ENCODE measurements at regions of chr5 and their contacts with region 1.

Region 1: DNA sequence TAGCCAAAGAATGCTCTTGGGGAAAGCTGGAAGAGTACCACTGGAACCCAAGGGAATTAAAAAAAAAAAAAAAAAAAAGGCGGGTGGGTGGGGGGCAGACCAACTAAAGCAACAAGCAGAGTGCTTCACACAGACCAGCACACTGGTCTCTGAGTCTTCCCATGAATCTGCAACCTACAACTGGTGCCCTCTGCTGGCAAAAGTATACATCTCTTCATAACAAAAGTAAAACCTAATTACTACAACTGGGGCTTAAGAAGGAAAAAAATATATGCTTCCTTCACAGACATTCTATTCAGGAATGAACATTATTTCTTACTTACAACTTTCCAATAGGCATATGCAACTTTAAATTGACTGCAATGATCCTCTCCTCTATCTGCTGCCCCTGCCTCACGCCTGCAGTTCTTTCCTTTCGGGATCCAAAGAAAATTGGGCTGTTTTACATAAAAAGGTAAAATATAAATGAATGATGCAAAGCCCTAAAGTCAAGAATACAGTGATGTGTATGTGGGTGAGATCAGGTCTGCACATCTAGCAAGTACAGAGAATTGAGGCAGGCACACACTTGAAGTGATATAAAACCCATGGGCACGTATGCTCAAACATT is 7.2 kb upstream of the KLHL3 start:
- DNase-seq: peak; percentile 26 to 79 (median 38)
- ATAC-seq: peak; percentile 91
- H3K4me3 ChIP-seq: no peak overlapping the region
- H3K27ac ChIP-seq: no peak overlapping the region
- H3K4me1 ChIP-seq: no peaks in the 10 kb centered on the region
- H3K27me3 ChIP-seq: peaks cover 0 to 3% of the 10 kb centered on the region in 2 experiments; a peak in 2 of 5 replicates
- CTCF ChIP-seq: peak; percentile 55 to 78 (median 62)
- EP300 ChIP-seq: no peak
- POLR2A ChIP-seq: no peak
- RAD21 ChIP-seq: peak; percentile 50 to 63

Region 2: GRCh38 chr5:137531266-137531665 is 211.9 kb before region 1 on chr5:
- CTCF ChIA-PET with region 1: no interaction called
- POLR2A ChIA-PET with region 1: no interaction called
- in situ Hi-C with region 1: no loop called
- intact Hi-C with region 1: no loop called
- DNase-seq: no peak
- ATAC-seq: no peak
- H3K4me3 ChIP-seq: no peak overlapping the region
- H3K27ac ChIP-seq: no peak overlapping the region
- H3K4me1 ChIP-seq: no peaks in the 10 kb centered on the region
- H3K27me3 ChIP-seq: no peaks in the 10 kb centered on the region
- CTCF ChIP-seq: no peak
- EP300 ChIP-seq: no peak
- POLR2A ChIP-seq: no peak
- RAD21 ChIP-seq: no peak

Region 3: DNA sequence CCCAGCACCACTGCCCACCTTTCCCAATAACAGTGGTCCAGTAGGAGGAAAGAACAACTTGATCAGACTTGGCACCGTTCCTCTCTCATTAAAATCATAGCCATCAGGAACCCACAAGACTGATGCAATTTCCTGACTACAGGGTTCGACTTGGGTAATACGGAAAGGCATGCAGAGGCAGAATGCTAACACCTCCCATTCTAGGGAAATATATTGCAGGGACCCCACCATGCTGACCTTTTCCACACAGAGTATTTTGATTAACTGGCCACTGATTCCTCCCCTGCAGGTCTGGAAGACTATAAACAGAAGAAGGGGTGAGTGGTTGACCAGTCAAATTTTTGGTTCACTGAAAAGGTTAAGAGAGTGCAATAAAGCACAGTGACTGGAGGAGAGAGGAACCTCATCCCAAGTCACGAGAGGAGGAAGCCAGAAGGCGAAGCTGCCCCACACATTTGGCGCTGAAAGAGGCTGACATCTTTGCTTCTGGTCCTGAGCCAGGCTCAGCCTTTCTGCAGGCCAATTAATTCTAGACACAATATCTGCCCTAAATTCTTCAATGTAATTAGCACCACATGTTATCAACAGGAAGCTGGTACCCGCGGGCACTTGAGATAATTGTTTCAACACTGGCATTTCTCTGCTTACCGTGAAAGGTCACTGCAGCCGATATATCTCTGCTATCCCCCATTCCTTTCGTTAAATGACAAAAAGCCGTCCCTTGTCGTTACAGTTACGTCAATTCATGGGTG is 179.3 kb before region 1 on chr5:
- CTCF ChIA-PET with region 1: no interaction called
- POLR2A ChIA-PET with region 1: no interaction called
- in situ Hi-C with region 1: no loop called
- intact Hi-C with region 1: no loop called
- DNase-seq: no peak
- ATAC-seq: no peak
- H3K4me3 ChIP-seq: no peak overlapping the region
- H3K27ac ChIP-seq: no peak overlapping the region
- H3K4me1 ChIP-seq: no peaks in the 10 kb centered on the region
- H3K27me3 ChIP-seq: peaks cover 3 to 17% of the 10 kb centered on the region in 2 experiments; a peak in 3 of 5 replicates
- CTCF ChIP-seq: no peak
- EP300 ChIP-seq: no peak
- POLR2A ChIP-seq: no peak
- RAD21 ChIP-seq: no peak

Region 4: GRCh38 chr5:137619191-137619870 is 123.8 kb before region 1 on chr5:
- CTCF ChIA-PET with region 1: no interaction called
- POLR2A ChIA-PET with region 1: no interaction called
- in situ Hi-C with region 1: no loop called
- intact Hi-C with region 1: no loop called
- DNase-seq: peak in 1 of 4 experiments; percentile 9
- ATAC-seq: no peak
- H3K4me3 ChIP-seq: no peak overlapping the region
- H3K27ac ChIP-seq: no peak overlapping the region
- H3K4me1 ChIP-seq: no peaks in the 10 kb centered on the region
- H3K27me3 ChIP-seq: peaks cover 0 to 22% of the 10 kb centered on the region in 2 experiments; a peak in 2 of 5 replicates
- CTCF ChIP-seq: no peak
- EP300 ChIP-seq: no peak
- POLR2A ChIP-seq: no peak
- RAD21 ChIP-seq: no peak

Region 5: GRCh38 chr5:137629646-137630045 is 113.5 kb before region 1 on chr5:
- CTCF ChIA-PET with region 1: interaction called, 21 read pairs
- POLR2A ChIA-PET with region 1: no interaction called
- in situ Hi-C with region 1: no loop called
- intact Hi-C with region 1: loop called (anchors 1 kb)
- DNase-seq: peak; percentile 62 to 69 (median 64)
- ATAC-seq: peak; percentile 95
- H3K4me3 ChIP-seq: no peak overlapping the region
- H3K27ac ChIP-seq: no peak overlapping the region
- H3K4me1 ChIP-seq: no peaks in the 10 kb centered on the region
- H3K27me3 ChIP-seq: peaks cover 2 to 22% of the 10 kb centered on the region in 2 experiments; a peak in 4 of 5 replicates
- CTCF ChIP-seq: peak; percentile 75 to 90 (median 77)
- EP300 ChIP-seq: no peak
- POLR2A ChIP-seq: no peak
- RAD21 ChIP-seq: peak; percentile 83 to 93

Region 6: GRCh38 chr5:137660349-137660817 is 82.8 kb before region 1 on chr5:
- CTCF ChIA-PET with region 1: interaction called, 17 read pairs
- POLR2A ChIA-PET with region 1: interaction called, 5 read pairs
- in situ Hi-C with region 1: no loop called
- intact Hi-C with region 1: loop called (anchors 1 kb)
- DNase-seq: peak; percentile 43 to 74 (median 52)
- ATAC-seq: peak; percentile 96
- H3K4me3 ChIP-seq: no peak overlapping the region
- H3K27ac ChIP-seq: no peak overlapping the region
- H3K4me1 ChIP-seq: no peaks in the 10 kb centered on the region
- H3K27me3 ChIP-seq: peaks cover 0 to 2% of the 10 kb centered on the region in 2 experiments; a peak in 1 of 5 replicates
- CTCF ChIP-seq: peak; percentile 70 to 83 (median 80)
- EP300 ChIP-seq: no peak
- POLR2A ChIP-seq: no peak
- RAD21 ChIP-seq: peak; percentile 79 to 85

Region 7: GRCh38 chr5:137754126-137754960 is 11.2 kb after region 1 on chr5 and contains the start of gene HNRNPA0:
- CTCF ChIA-PET with region 1: no interaction called
- POLR2A ChIA-PET with region 1: interaction called, 18 read pairs
- in situ Hi-C with region 1: no loop called
- intact Hi-C with region 1: no loop called
- DNase-seq: peak; percentile 94 to 98 (median 96)
- ATAC-seq: peak; percentile 91
- H3K4me3 ChIP-seq: peak within 1 kb of the TSS; percentile 76
- H3K27ac ChIP-seq: peak within 1 kb of the TSS; percentile 97
- H3K4me1 ChIP-seq: peaks cover 0 to 16% of the 10 kb centered on the region in 2 experiments; a peak in 3 of 5 replicates
- H3K27me3 ChIP-seq: peaks cover 5 to 6% of the 10 kb centered on the region in 2 experiments; a peak in 3 of 5 replicates
- CTCF ChIP-seq: peak in 2 of 3 experiments; percentile 17 to 33; a peak in 2 of 6 replicates
- EP300 ChIP-seq: peak; percentile 96
- POLR2A ChIP-seq: peak; percentile 98
- RAD21 ChIP-seq: no peak
- polyA plus RNA-seq, gene HNRNPA0: 5.0 to 5.7 TPM

Region 8: GRCh38 chr5:138716456-138716924 is 973.4 kb after region 1 on chr5:
- CTCF ChIA-PET with region 1: no interaction called
- POLR2A ChIA-PET with region 1: no interaction called
- in situ Hi-C with region 1: no loop called
- intact Hi-C with region 1: no loop called
- DNase-seq: no peak
- ATAC-seq: peak; percentile 60
- H3K4me3 ChIP-seq: no peak overlapping the region
- H3K27ac ChIP-seq: no peak overlapping the region
- H3K4me1 ChIP-seq: no peaks in the 10 kb centered on the region; a peak in 2 of 5 replicates
- H3K27me3 ChIP-seq: no peaks in the 10 kb centered on the region
- CTCF ChIP-seq: no peak
- EP300 ChIP-seq: no peak
- POLR2A ChIP-seq: no peak
- RAD21 ChIP-seq: no peak